Activated CD4-positive, alpha-beta memory T cell treated with anti-CD3 and anti-CD28 coated beads, Interleukin-2, amount 10 ng/mL, durations not matched to agents 7 days and 5 days (primary cell): ENCODE measurements at regions of chr14 and their contacts with region 1.

Region 1: DNA sequence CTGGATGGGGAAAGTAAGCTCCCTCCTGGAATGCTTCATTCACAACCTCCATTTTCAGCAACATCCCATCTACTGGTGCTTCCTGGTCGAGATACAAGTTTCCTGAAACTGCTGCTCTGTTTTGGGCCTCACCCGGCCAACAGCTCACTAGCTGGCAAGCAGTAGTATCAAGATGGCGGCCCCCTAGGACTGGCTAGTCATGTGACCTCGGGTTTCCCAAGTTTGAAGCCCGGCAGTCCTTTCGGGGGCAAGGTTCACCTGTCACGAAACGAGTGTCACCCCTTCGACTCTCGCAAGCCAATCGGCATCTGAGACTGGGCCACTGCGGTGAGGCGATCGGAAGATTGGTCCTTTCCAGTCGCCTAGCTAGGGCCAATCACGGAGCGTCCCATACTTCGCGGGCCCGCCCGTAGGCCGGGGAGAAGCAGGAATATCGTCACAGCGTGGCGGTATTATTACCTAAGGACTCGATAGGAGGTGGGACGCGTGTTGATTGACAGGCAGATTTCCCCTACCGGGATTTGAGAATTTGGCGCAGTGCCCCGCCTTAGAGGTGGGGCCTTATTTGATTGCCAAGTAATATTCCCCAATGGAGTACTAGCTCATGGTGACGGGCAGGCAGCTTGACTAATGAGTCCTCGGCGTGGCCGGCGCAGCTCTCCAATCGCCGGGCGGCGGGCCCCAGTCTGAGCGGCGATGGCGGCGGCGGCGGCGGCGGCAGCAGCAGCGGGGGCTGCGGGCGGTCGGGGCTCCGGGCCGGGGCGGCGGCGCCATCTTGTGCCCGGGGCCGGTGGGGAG is at the start of gene PABPN1:
- DNase-seq: peak; percentile 99
- H3K4me3 Mint-ChIP-seq: peak within 1 kb of the TSS; percentile 87
- H3K27ac Mint-ChIP-seq: peak within 1 kb of the TSS; percentile 95
- H3K4me1 Mint-ChIP-seq: peaks cover 31% of the 10 kb centered on the region
- H3K27me3 Mint-ChIP-seq: no peaks in the 10 kb centered on the region
- total RNA-seq, gene PABPN1: 194 to 198 TPM

Region 2: GRCh38 chr14:23095196-23096108 is 225.5 kb before region 1 on chr14 and contains the start of gene C14orf119:
- CTCF ChIA-PET with region 1: interaction called, 3 read pairs
- POLR2A ChIA-PET with region 1: interaction called, 31 read pairs
- DNase-seq: peak; percentile 100
- H3K4me3 Mint-ChIP-seq: no peak within 1 kb of the TSS
- H3K27ac Mint-ChIP-seq: no peak within 1 kb of the TSS
- H3K4me1 Mint-ChIP-seq: peaks cover 36% of the 10 kb centered on the region
- H3K27me3 Mint-ChIP-seq: no peaks in the 10 kb centered on the region
- total RNA-seq, gene C14orf119: 49.2 to 55.5 TPM

Region 3: GRCh38 chr14:23286020-23286905 is 34.7 kb before region 1 on chr14 and contains the start of gene HOMEZ:
- CTCF ChIA-PET with region 1: interaction called, 13 read pairs
- POLR2A ChIA-PET with region 1: interaction called, 45 read pairs
- DNase-seq: peak; percentile 98
- H3K4me3 Mint-ChIP-seq: peak within 1 kb of the TSS; percentile 89
- H3K27ac Mint-ChIP-seq: peak within 1 kb of the TSS; percentile 84
- H3K4me1 Mint-ChIP-seq: peaks cover 28% of the 10 kb centered on the region
- H3K27me3 Mint-ChIP-seq: no peaks in the 10 kb centered on the region
- total RNA-seq, gene HOMEZ: 11.7 to 11.9 TPM

Region 4: GRCh38 chr14:23294734-23295561 is 26.0 kb before region 1 on chr14:
- CTCF ChIA-PET with region 1: interaction called, 36 read pairs
- POLR2A ChIA-PET with region 1: interaction called, 282 read pairs
- DNase-seq: peak; percentile 59
- H3K4me3 Mint-ChIP-seq: no peak overlapping the region
- H3K27ac Mint-ChIP-seq: peak overlapping the region; percentile 0
- H3K4me1 Mint-ChIP-seq: peaks cover 20% of the 10 kb centered on the region
- H3K27me3 Mint-ChIP-seq: peaks cover 1% of the 10 kb centered on the region

Region 5: GRCh38 chr14:23301288-23301968 is 19.5 kb before region 1 on chr14:
- CTCF ChIA-PET with region 1: interaction called, 58 read pairs
- POLR2A ChIA-PET with region 1: interaction called, 282 read pairs
- DNase-seq: peak; percentile 98
- H3K4me3 Mint-ChIP-seq: peak overlapping the region; percentile 93
- H3K27ac Mint-ChIP-seq: peak overlapping the region; percentile 95
- H3K4me1 Mint-ChIP-seq: peaks cover 31% of the 10 kb centered on the region
- H3K27me3 Mint-ChIP-seq: peaks cover 8% of the 10 kb centered on the region

Region 6: DNA sequence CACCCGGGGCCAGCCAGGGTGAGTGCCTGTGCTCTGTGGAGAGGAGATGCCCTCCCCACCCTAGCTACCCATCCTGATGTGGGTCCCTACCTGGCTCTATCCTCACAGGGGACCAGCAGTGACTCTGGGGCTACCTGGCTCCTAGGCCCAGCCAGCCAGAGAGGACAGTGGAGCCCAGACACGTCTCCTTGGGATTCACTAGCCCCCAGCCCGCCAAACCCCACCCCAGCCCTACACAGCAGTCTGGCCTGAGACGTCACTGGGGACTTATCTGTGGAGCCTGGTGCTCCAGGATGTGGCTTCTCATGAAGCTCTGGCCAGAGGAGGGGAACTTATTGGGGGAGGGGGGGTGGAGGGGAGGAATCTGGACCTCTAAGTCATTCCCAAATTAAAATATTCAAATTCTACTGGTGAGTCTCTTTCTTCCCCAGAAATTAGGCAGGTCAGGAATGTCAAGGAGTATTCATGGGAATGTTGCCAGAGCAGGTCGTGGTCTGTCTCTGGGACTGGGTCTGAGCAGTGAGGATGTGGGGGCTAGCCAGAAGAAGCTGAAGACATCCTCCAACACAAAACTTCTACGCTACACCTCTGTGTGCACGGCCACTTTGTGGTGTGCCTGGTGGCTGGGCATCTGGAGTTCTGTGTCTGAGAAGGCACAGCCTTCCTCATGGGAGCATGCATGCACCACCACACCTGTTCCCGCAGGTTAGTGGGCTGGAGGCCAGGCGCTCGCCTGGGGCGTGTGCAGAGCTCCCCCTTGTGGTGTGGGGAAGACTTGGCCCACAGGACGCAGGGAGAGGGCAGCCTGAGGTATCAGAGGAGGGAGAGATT is 58.6 kb after region 1 on chr14:
- CTCF ChIA-PET with region 1: interaction called, 6 read pairs
- POLR2A ChIA-PET with region 1: interaction called, 10 read pairs
- DNase-seq: peak; percentile 63
- H3K4me3 Mint-ChIP-seq: no peak overlapping the region
- H3K27ac Mint-ChIP-seq: no peak overlapping the region
- H3K4me1 Mint-ChIP-seq: no peaks in the 10 kb centered on the region
- H3K27me3 Mint-ChIP-seq: peaks cover 3% of the 10 kb centered on the region

Region 7: DNA sequence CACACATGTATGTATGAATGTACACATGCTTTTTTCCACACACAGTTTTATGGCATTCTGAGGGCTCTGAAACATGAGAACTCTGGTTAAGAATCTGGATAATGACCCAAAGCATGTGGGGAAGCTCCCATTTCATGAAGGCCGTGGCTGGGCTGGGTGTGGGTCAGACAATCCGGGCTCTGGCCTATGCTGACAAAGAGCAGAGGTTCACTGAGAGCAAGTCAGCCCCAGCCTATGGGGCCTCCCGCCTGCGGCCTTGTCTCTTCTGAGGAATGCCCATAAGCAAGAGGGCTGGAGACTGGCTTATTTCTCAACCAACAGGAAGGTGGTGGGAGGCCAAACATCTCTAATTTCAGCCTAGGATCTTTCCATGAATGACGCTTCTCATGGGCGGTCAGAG is 78.6 kb after region 1 on chr14:
- CTCF ChIA-PET with region 1: no interaction called
- POLR2A ChIA-PET with region 1: no interaction called
- DNase-seq: no peak
- H3K4me3 Mint-ChIP-seq: no peak overlapping the region
- H3K27ac Mint-ChIP-seq: no peak overlapping the region
- H3K4me1 Mint-ChIP-seq: no peaks in the 10 kb centered on the region
- H3K27me3 Mint-ChIP-seq: no peaks in the 10 kb centered on the region